CD4-positive, alpha-beta T cell (primary cell): ENCODE measurements at regions of chr6 and their contacts with region 1.

Region 1: GRCh38 chr6:99520855-99521632 is 5.8 kb upstream of the USP45 start:
- DNase-seq: peak; percentile 44 to 87 (median 58)
- ATAC-seq: peak; percentile 91
- H3K4me3 ChIP-seq: peak overlapping the region; percentile 78
- H3K4me3 Mint-ChIP-seq: peak overlapping the region; percentile 95
- H3K27ac ChIP-seq: peak overlapping the region; percentile 31 to 43
- H3K27ac Mint-ChIP-seq: peak overlapping the region; percentile 86
- H3K4me1 ChIP-seq: peaks cover 12% of the 10 kb centered on the region
- H3K4me1 Mint-ChIP-seq: peaks cover 40% of the 10 kb centered on the region
- H3K27me3 ChIP-seq: no peaks in the 10 kb centered on the region
- H3K27me3 Mint-ChIP-seq: no peaks in the 10 kb centered on the region
- CTCF ChIP-seq: peak; percentile 95

Region 2: GRCh38 chr6:99485395-99485773 is 35.7 kb before region 1 on chr6:
- CTCF ChIA-PET with region 1: interaction called, 5 read pairs
- POLR2A ChIA-PET with region 1: no interaction called
- intact Hi-C with region 1: loop called in 1 of 2 experiments (anchors 5 kb)
- DNase-seq: no peak
- ATAC-seq: no peak
- H3K4me3 ChIP-seq: no peak overlapping the region
- H3K4me3 Mint-ChIP-seq: no peak overlapping the region
- H3K27ac ChIP-seq: no peak overlapping the region
- H3K27ac Mint-ChIP-seq: no peak overlapping the region
- H3K4me1 ChIP-seq: peaks cover 2% of the 10 kb centered on the region
- H3K4me1 Mint-ChIP-seq: peaks cover 2% of the 10 kb centered on the region
- H3K27me3 ChIP-seq: no peaks in the 10 kb centered on the region
- H3K27me3 Mint-ChIP-seq: no peaks in the 10 kb centered on the region
- CTCF ChIP-seq: no peak

Region 3: GRCh38 chr6:99568103-99568933 is 47.3 kb after region 1 on chr6 and contains the start of gene CCNC:
- CTCF ChIA-PET with region 1: interaction called, 9 read pairs
- POLR2A ChIA-PET with region 1: interaction called, 30 read pairs
- intact Hi-C with region 1: no loop called
- DNase-seq: peak; percentile 78 to 94 (median 88)
- ATAC-seq: peak; percentile 90
- H3K4me3 ChIP-seq: peak within 1 kb of the TSS; percentile 88
- H3K4me3 Mint-ChIP-seq: peak within 1 kb of the TSS; percentile 97
- H3K27ac ChIP-seq: peak within 1 kb of the TSS in 1 of 2 donors; percentile 57
- H3K27ac Mint-ChIP-seq: peak within 1 kb of the TSS; percentile 91
- H3K4me1 ChIP-seq: peaks cover 9% of the 10 kb centered on the region
- H3K4me1 Mint-ChIP-seq: peaks cover 47% of the 10 kb centered on the region
- H3K27me3 ChIP-seq: no peaks in the 10 kb centered on the region
- H3K27me3 Mint-ChIP-seq: no peaks in the 10 kb centered on the region
- CTCF ChIP-seq: no peak
- total RNA-seq, gene CCNC: 40.5 to 42.6 TPM